ENCODE measurements at regions of chr20 and their contacts with region 1.

Region 1: DNA sequence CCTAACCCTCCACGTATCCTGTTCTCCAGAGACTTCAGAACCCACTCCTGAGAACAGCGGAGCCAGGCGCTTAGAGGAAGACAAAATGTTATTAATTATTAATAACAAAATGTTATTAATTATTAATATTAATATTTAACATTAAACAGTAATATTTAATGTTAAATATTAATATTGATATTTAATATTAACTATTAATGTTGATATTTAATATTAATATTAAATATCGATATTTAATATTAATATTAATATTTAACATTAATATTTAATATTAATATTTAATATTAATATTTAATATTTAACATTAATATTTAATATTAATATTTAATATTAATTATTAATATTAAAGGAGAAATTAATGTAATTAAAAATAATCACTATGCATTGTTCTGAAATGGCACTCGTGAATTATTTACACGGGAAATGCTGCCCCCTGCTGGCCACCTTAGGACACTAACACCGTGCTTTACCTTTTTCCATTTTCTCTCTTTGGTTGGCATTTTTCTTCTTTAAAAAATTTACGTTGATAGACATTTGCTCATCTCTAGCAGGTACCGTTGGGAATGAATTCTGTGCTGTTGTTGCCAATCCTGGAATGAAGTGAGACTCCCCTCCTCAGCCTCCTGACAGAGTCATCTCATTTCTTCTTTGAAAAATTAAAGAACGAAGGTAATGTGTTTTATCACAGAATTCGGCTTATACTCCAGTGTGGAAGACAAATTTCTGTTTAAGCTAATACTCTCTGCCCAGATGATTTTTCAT is 7.5 kb upstream of the GGTLC1 start:
- DNase-seq: peak; percentile 6
- H3K4me3 ChIP-seq: no peak overlapping the region
- H3K27ac ChIP-seq: no peak overlapping the region
- H3K4me1 ChIP-seq: no peaks in the 10 kb centered on the region
- H3K27me3 ChIP-seq: no peaks in the 10 kb centered on the region
- CTCF ChIP-seq: peak; percentile 59 to 71

Region 2: DNA sequence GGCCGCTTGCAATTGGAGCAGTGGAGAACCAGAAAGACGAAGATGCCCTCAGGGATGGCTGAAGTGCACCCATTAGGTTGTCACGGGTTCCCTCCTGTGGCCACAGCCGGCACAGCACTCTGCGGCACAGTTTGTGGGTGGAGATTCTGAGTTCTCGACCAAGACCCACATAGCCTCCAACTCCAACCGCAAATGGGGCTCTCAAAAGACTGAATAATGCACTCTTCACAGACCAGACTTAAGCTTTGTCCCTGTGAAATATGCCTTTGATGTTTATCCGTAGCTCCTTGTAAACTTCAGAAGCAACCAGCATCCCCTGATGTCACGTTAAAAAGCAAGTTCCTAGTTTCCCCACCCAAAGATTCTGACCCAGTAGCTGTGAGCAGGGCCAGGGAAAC is 389.4 kb before region 1 on chr20:
- CTCF ChIA-PET with region 1: no interaction called
- dilution Hi-C with region 1: no loop called
- in situ Hi-C with region 1: no loop called
- intact Hi-C with region 1: no loop called
- DNase-seq: peak; percentile 61
- H3K4me3 ChIP-seq: no peak overlapping the region
- H3K27ac ChIP-seq: no peak overlapping the region
- H3K4me1 ChIP-seq: no peaks in the 10 kb centered on the region
- H3K27me3 ChIP-seq: no peaks in the 10 kb centered on the region
- CTCF ChIP-seq: peak; percentile 97

Region 3: DNA sequence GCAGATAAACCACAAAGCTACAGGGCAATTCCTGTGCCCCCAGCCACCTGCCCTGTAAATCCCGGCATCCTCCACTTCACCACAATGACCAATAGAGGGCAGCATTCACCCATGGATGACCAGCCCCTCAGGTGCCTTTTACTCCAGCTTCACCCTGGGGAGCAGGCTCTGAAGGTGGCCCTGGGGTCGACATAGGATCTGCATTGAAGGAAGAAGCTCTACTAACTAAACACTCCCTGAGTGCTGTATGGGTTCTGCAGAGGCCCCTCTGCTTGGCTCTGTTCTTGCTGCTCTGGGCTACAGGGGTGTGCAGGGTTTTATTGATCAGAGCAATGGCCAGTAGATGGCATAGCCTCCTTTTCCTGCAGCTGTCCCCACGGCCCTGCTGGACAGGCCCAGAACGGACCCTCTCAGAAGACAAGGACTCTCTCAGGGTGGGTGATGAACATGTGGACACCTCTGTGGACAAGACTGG is 327.6 kb before region 1 on chr20:
- CTCF ChIA-PET with region 1: no interaction called
- dilution Hi-C with region 1: no loop called
- in situ Hi-C with region 1: no loop called
- intact Hi-C with region 1: loop called (anchors 10 kb)
- DNase-seq: peak; percentile 49
- H3K4me3 ChIP-seq: no peak overlapping the region
- H3K27ac ChIP-seq: no peak overlapping the region
- H3K4me1 ChIP-seq: no peaks in the 10 kb centered on the region
- H3K27me3 ChIP-seq: no peaks in the 10 kb centered on the region
- CTCF ChIP-seq: peak; percentile 81 to 86

Region 4: GRCh38 chr20:23794841-23795240 is 201.2 kb before region 1 on chr20:
- CTCF ChIA-PET with region 1: no interaction called
- dilution Hi-C with region 1: no loop called
- in situ Hi-C with region 1: no loop called
- intact Hi-C with region 1: loop called (anchors 10 kb)
- DNase-seq: no peak
- H3K4me3 ChIP-seq: no peak overlapping the region
- H3K27ac ChIP-seq: no peak overlapping the region
- H3K4me1 ChIP-seq: no peaks in the 10 kb centered on the region
- H3K27me3 ChIP-seq: peaks cover 6% of the 10 kb centered on the region
- CTCF ChIP-seq: no peak

Region 5: DNA sequence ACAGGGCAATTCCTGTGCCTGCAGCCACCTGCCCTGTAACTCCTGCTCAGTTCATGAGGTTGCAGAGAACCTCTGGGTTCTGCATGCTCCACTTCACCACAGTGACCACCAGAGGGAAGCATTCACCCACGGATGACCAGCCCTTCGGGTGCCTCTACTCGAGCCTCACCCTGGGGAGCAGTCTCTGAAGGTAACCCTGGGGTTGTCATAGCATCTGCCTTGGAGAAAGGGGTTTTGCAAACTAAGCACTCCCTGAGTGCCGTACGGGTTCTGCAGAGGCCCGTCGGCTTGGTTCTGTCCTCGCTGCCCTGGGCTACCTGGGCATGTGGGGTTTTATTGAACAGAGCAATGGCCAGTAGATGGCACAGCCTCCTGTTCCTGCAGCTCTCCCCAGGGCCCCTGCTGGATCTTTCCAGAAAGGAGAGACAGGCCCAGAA is 106.3 kb before region 1 on chr20:
- CTCF ChIA-PET with region 1: no interaction called
- dilution Hi-C with region 1: no loop called
- in situ Hi-C with region 1: no loop called
- intact Hi-C with region 1: loop called (anchors 2 kb)
- DNase-seq: peak; percentile 71
- H3K4me3 ChIP-seq: no peak overlapping the region
- H3K27ac ChIP-seq: no peak overlapping the region
- H3K4me1 ChIP-seq: no peaks in the 10 kb centered on the region
- H3K27me3 ChIP-seq: peaks cover 2% of the 10 kb centered on the region
- CTCF ChIP-seq: peak; percentile 44 to 79

Region 6: DNA sequence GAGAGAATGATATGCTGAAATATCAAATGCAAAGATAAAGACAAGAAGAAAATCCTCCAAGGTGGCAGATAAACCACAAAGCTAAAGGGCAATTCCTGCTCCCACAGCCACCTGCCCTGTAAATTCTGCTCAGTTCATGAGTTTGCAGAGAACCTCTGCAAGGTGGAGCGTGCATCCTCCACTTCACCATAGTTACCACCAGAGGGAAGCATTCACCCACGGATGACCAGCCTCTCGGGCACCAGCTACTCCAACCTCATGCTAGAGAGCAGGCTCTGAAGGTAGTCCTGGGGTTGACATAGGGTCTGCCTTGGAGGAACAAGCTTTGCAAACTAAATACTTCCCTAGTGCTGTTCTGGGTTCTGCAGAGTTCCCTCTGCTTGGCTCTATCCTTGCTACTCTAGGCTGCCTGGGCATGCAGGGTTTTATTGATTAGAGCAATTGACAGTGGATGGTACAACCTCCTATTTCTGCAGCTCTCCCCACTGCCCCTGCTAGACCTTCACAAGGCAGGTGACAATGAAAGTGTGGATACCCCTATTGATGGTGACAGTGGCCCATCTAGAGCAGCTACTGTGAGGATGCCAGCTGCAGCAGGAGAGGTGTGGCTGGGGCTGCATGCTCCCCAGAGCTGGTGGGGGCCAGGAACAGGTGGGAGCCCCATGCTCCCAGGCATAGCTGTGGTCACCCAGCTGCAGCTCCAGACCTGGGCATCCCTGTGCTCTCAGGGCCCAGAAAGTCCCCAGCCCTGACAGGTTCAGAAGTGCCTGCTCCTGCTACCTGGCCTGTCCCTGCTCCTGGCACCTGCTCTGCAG is 58.6 kb before region 1 on chr20:
- CTCF ChIA-PET with region 1: no interaction called
- dilution Hi-C with region 1: no loop called
- in situ Hi-C with region 1: no loop called
- intact Hi-C with region 1: loop called (anchors 5 kb)
- DNase-seq: peak; percentile 42
- H3K4me3 ChIP-seq: no peak overlapping the region
- H3K27ac ChIP-seq: no peak overlapping the region
- H3K4me1 ChIP-seq: no peaks in the 10 kb centered on the region
- H3K27me3 ChIP-seq: no peaks in the 10 kb centered on the region
- CTCF ChIP-seq: peak; percentile 62 to 74

Region 7: GRCh38 chr20:24100385-24101011 is 104.4 kb after region 1 on chr20:
- CTCF ChIA-PET with region 1: no interaction called
- dilution Hi-C with region 1: no loop called
- in situ Hi-C with region 1: no loop called
- intact Hi-C with region 1: loop called (anchors 5 kb)
- DNase-seq: peak; percentile 66
- H3K4me3 ChIP-seq: no peak overlapping the region
- H3K27ac ChIP-seq: no peak overlapping the region
- H3K4me1 ChIP-seq: peaks cover 13% of the 10 kb centered on the region
- H3K27me3 ChIP-seq: no peaks in the 10 kb centered on the region
- CTCF ChIP-seq: peak; percentile 51 to 61

Region 8: GRCh38 chr20:24303381-24303780 is 307.3 kb after region 1 on chr20:
- CTCF ChIA-PET with region 1: no interaction called
- dilution Hi-C with region 1: no loop called
- in situ Hi-C with region 1: no loop called
- intact Hi-C with region 1: no loop called
- DNase-seq: no peak
- H3K4me3 ChIP-seq: no peak overlapping the region
- H3K27ac ChIP-seq: no peak overlapping the region
- H3K4me1 ChIP-seq: no peaks in the 10 kb centered on the region
- H3K27me3 ChIP-seq: no peaks in the 10 kb centered on the region
- CTCF ChIP-seq: peak in 1 of 2 donors; percentile 24

Region 9: DNA sequence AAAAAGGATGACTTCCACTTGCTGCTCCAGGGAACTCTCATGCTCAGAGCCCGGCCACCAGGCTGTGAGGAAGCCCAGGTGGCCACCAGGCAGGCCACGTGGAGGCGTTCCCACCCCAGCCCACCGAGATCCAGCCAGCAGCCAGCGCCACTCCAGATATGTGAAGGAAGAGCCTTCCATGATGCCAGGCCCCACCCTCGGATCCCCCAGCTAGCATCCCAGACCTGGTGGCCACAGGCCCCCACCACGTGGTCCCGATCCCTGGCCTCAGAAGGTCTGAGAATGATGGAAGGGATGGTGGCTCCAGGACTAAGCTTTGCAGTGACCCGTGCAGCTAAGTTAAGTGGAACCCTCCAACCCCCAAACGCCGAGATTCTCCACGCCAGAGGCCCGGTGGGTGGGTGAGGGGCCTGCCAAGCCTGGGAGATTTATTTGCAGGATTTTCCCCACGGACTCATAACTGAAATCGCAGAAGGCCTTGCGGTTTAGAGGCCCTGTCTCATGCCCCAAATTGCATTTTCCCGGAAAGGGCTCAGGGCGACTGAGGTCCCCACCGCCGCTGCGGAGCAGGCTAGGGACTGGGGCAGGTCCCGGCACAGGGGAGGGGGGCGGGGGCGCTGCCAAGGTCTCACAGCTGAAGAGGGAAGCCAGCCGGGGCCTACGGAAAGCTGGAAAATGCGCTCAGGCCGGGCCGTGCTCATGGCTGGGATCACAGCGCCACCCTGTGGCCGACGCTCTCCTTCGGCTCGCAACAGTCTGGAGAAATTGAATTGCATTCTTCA is 921.9 kb after region 1 on chr20:
- CTCF ChIA-PET with region 1: no interaction called
- dilution Hi-C with region 1: no loop called
- in situ Hi-C with region 1: no loop called
- intact Hi-C with region 1: loop called (anchors 2 kb)
- DNase-seq: peak; percentile 33
- H3K4me3 ChIP-seq: no peak overlapping the region
- H3K27ac ChIP-seq: no peak overlapping the region
- H3K4me1 ChIP-seq: no peaks in the 10 kb centered on the region
- H3K27me3 ChIP-seq: no peaks in the 10 kb centered on the region
- CTCF ChIP-seq: peak; percentile 75 to 88